Colonic mucosa (tissue), 4 donors: ENCODE measurements at regions of chr20 and their contacts with region 1.

Region 1: GRCh38 chr20:63009045-63009961 is 2.5 kb upstream of the BHLHE23 start:
- DNase-seq: peak; percentile 79
- H3K4me3 ChIP-seq: no peak overlapping the region
- H3K27ac ChIP-seq: no peak overlapping the region
- H3K4me1 ChIP-seq: no peaks in the 10 kb centered on the region
- H3K27me3 ChIP-seq: peaks cover 73% of the 10 kb centered on the region
- CTCF ChIP-seq: peak; percentile 88

Region 2: GRCh38 chr20:62872184-62872847 is 137.0 kb before region 1 on chr20:
- intact Hi-C with region 1: loop called (anchors 2 kb)
- DNase-seq: no peak
- H3K4me3 ChIP-seq: no peak overlapping the region
- H3K27ac ChIP-seq: no peak overlapping the region
- H3K4me1 ChIP-seq: no peaks in the 10 kb centered on the region
- H3K27me3 ChIP-seq: no peaks in the 10 kb centered on the region
- CTCF ChIP-seq: no peak

Region 3: DNA sequence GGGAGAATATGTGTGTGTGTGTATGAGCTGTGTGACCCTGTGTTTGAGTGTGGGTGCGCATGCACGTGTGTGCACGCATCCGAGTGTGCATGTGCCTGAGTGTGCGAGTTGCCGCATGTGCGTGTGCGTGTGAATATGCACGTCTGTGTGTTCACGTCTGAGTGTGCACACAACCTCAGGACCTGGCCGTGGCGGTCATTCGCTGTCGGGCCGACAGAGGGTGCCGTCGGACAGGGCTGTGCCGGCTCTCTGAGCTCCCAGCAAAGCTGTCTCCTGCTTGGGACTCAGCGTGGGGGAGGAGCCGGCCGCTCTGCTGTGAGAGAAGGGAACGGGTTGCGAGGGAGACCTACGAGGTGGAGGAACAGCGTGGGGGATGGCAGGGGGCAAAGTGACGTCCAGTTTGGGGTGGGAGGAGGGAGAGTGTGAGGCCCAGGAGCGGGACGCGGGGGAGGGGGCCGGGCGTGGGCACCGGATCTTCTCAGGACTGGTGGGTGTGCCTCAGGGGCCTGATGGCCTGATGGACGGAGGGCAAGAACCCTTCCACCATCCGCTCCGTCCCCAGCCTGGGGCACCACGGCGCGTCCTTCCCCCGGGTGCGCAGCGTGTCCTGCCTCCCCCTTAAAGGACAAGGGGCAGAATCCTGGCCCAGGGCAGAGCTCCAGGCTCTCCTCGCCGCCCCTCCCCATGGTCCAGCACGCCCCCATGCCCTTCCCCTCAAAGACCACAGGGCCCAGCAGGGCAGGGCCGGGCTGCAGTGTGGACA is 36.9 kb before region 1 on chr20:
- intact Hi-C with region 1: loop called (anchors 2 kb)
- DNase-seq: peak; percentile 85
- H3K4me3 ChIP-seq: peak overlapping the region; percentile 24
- H3K27ac ChIP-seq: no peak overlapping the region
- H3K4me1 ChIP-seq: no peaks in the 10 kb centered on the region
- H3K27me3 ChIP-seq: peaks cover 37% of the 10 kb centered on the region
- CTCF ChIP-seq: peak; percentile 84